KBM-7 (cell line): ENCODE measurements at regions of chr2 and their contacts with region 1.

Region 1: DNA sequence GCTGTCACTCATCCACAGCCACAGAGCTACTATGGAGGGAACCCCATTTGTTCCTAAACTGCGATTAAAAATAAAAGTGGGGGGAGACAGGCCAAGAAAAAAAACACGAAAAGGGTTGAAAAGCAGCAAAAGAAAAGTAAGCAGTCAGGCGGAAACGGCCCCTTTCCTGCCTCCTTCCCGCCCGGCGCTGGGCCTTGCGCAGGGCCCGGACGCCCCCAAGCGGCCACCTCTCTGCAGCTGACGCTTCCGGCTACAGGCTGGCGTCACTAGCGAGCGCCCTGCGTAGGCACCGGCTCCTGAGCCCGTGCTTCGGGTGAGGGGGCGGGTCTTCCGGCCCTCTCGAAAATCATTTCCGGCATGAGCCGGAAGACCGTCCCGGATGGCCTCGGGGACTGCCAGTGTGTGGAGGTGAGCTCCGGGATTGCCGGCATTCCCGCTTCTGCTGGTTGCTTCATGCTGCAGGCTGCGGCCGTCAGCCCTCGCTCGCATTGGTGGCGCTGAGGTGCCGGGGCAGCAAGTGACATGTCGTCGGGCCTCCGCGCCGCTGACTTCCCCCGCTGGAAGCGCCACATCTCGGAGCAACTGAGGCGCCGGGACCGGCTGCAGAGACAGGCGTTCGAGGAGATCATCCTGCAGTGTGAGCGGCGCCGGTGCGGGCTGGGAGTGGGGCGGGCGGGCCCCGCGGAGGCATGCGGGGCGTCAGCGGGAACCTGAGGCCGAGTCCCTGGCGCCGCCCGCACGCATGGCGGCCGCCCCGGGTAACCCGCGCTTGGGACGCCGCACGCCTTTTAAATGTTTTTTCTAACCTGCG is at the start of gene ATG16L1:
- DNase-seq: peak; percentile 97

Region 2: GRCh38 chr2:232854082-232854481 is 397.4 kb before region 1 on chr2:
- in situ Hi-C with region 1: loop called (anchors 25 kb)
- DNase-seq: no peak